Naive thymus-derived CD8-positive, alpha-beta T cell (primary cell): ENCODE measurements at regions of chr2 and their contacts with region 1.

Region 1: DNA sequence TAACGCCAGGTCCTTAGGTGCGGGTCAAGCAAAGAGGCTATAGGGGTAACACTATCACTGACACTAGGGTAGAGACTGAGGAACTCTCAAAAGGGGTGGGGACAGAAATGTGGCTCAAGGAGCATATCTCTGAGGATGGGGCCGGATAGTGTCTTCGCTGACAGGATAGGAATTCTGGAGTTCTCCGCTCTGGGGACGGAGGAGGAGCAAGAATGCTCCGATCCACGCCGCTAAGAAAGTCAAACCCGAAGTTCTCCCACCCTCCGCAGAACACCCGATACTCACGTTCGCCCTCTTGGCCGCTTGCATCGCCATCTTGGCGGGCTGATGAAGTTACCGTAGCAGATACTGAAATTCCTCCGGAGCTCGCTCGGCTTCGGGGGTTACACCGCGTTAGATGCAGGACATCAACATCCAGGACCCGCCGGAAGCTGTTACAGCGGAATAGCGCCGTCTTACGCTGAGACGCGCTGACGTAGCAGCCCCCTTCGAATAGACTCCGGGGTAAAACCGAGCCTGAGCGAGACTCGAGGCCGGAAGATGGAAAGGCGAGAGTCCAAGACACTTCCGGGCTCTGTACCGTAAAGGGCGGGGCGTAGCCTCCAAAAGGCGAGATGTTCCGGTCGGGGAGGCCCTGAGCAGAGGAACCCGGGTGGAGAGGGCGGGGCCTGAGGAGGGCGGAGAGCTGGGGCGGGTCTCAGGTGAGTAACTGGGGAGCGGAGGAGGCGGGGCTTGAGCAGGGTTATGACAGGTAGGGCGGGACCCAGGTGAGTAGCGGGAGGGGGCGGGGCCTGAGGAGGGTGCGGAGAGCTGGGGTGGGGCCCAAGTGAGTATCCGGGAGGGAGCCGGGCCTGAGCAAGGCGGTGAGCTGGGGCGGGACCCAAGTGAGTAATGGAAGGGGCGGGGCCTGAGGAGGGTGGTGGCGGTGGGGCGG is at the start of gene SF3B6:
- DNase-seq: peak; percentile 97 to 100 (median 100)
- ATAC-seq: peak; percentile 81 to 82
- H3K4me3 Mint-ChIP-seq: peak within 1 kb of the TSS; percentile 96 to 100 (median 99)
- H3K27ac Mint-ChIP-seq: peak within 1 kb of the TSS; percentile 94 to 100 (median 99)
- H3K4me1 Mint-ChIP-seq: peaks cover 13 to 40% (median 35%) of the 10 kb centered on the region in 4 donors
- H3K27me3 Mint-ChIP-seq: no peaks in the 10 kb centered on the region
- polyA plus RNA-seq, gene SF3B6: 161 to 208 (median 195) TPM

Region 2: GRCh38 chr2:23939987-23940717 is 136.0 kb before region 1 on chr2 and contains the start of gene UBXN2A:
- POLR2A ChIA-PET with region 1: interaction called, 13 read pairs
- DNase-seq: peak; percentile 62 to 81 (median 77)
- ATAC-seq: peak; percentile 84
- H3K4me3 Mint-ChIP-seq: peak within 1 kb of the TSS; percentile 79 to 97 (median 94)
- H3K27ac Mint-ChIP-seq: peak within 1 kb of the TSS; percentile 73 to 95 (median 93)
- H3K4me1 Mint-ChIP-seq: peaks cover 19 to 39% (median 30%) of the 10 kb centered on the region in 4 donors
- H3K27me3 Mint-ChIP-seq: peaks cover 0 to 6% (median 0%) of the 10 kb centered on the region in 5 donors
- polyA plus RNA-seq, gene UBXN2A: 13.1 to 13.6 (median 13.6) TPM

Region 3: DNA sequence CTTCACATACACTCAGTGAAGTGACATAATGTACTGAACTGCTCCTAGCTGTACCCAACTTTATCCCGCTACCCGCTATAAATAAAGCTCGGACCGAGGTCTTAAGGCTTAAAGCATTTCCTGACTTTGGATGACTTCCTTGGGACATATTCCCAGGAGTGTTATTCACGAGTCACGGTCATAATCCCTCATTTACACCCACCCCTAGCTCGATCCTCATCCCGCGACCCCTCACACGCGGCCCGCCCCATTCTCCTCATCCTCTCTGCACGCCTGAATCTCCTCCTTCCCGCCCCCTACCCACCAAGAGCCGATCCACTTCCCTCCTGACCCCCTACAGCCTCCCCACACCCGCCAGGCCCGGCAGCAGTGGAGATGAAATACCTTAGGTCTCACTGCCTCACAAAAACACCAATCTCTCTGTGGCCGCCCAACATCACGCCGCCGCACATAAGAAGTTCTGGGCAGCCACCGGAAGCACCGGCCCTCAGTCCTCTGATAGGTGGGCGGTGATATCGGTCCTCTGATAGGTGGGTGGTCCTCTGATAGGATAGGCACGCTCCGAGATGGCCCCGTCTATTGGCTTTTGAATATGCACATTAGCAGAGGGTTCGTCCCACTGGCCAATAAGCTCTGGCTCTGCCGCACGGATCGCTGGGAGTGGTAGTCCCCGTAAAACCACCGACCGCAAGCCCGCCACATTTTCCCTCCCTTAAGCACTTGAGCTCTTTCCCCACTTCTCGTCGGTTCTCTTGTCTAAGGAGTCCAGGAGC is 29.1 kb before region 1 on chr2 and contains the start of gene WDCP:
- POLR2A ChIA-PET with region 1: interaction called, 48 read pairs
- DNase-seq: peak; percentile 79 to 97 (median 92)
- ATAC-seq: peak; percentile 98 to 100
- H3K4me3 Mint-ChIP-seq: peak within 1 kb of the TSS; percentile 93 to 99 (median 96)
- H3K27ac Mint-ChIP-seq: peak within 1 kb of the TSS; percentile 83 to 96 (median 94)
- H3K4me1 Mint-ChIP-seq: peaks cover 12 to 35% (median 30%) of the 10 kb centered on the region in 4 donors
- H3K27me3 Mint-ChIP-seq: peaks cover 0 to 5% (median 1%) of the 10 kb centered on the region in 5 donors
- polyA plus RNA-seq, gene WDCP: 3.4 to 6.5 (median 5.0) TPM

Region 4: DNA sequence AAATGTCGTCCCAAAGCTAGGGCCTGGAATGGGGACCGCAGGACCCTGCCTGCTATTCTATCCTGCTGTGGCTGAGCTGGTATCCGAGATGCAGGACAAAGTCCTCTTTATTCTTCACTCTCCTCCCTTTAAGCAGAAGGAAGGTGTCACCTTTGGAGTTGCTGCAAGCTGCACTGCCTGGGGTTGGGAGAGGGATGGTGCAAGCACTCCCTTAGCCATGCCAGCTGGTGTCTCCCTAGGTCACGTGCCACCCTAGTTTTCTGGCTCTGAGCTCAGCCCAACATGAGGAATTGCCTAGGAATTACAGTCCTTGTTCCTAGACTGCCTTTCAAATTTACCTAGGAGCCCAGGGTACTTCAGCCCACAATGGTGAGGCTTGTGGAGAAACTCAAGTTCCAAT is 77.3 kb after region 1 on chr2:
- POLR2A ChIA-PET with region 1: no interaction called
- DNase-seq: no peak
- ATAC-seq: no peak
- H3K4me3 Mint-ChIP-seq: no peak overlapping the region
- H3K27ac Mint-ChIP-seq: no peak overlapping the region
- H3K4me1 Mint-ChIP-seq: no peaks in the 10 kb centered on the region
- H3K27me3 Mint-ChIP-seq: peaks cover 0 to 3% (median 0%) of the 10 kb centered on the region in 5 donors